CD4-positive, alpha-beta memory T cell (primary cell): ENCODE measurements at regions of chr19 and their contacts with region 1.

Region 1: DNA sequence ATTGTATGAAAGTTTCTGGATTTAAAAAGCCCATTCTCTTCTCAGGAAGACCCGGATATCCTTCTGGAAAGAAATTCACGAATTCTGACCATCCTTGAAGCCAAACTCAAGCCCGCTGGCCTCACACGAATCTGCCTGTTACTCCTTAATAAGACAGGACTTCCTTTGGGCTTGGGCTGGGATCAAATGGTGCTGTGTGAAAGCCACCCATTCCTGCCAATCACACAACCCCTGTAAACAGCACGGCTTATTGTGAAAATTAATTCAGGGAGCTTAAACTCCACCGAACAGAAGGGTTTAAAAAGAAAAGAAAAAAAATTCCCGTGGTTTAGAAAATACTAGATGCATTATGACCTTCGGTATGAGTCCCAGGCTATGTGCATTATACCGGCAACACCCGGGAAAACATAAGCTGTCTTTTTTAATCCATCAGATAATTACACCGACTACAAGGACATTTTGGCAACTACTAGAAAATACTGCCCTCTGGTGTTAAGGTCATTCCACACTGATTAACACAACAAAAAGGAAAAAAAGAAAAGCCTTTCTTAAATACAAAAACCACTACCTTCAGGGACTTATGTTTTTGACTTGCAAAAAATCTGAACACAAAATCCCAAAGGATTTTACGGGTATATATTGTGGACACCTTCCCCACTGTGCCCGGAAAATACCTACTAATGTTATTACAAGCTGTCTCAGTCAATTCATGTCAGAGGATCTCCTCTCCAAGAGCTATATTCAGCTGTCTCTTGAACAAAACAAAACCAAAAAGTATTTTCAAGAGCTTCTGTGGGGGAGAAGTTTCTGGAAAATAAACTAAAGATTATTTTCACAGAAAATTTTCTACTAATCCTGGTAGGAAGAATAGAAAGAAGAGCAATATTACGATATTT is 76.0 kb upstream of the LSM14A start:
- DNase-seq: peak in 4 of 5 donors; percentile 37 to 47 (median 42)
- H3K4me3 ChIP-seq: no peak overlapping the region
- H3K4me3 Mint-ChIP-seq: no peak overlapping the region
- H3K27ac ChIP-seq: no peak overlapping the region
- H3K27ac Mint-ChIP-seq: no peak overlapping the region
- H3K4me1 ChIP-seq: no peaks in the 10 kb centered on the region
- H3K4me1 Mint-ChIP-seq: peaks cover 0 to 2% (median under 1%) of the 10 kb centered on the region in 4 donors
- H3K27me3 ChIP-seq: peaks cover 4% of the 10 kb centered on the region
- H3K27me3 Mint-ChIP-seq: peaks cover 10 to 18% of the 10 kb centered on the region in 2 donors

Region 2: GRCh38 chr19:33795370-33796163 is 300.7 kb before region 1 on chr19:
- CTCF ChIA-PET with region 1: interaction called, 6 read pairs
- POLR2A ChIA-PET with region 1: no interaction called
- intact Hi-C with region 1: loop called (anchors 5 kb)
- DNase-seq: peak; percentile 31 to 54 (median 45)
- H3K4me3 ChIP-seq: peak overlapping the region in 1 of 2 donors; percentile 35
- H3K4me3 Mint-ChIP-seq: peak overlapping the region; percentile 74 to 87 (median 78)
- H3K27ac ChIP-seq: peak overlapping the region; percentile 15
- H3K27ac Mint-ChIP-seq: peak overlapping the region in 3 of 7 donors; percentile 16 to 77 (median 47)
- H3K4me1 ChIP-seq: peaks cover 14% of the 10 kb centered on the region
- H3K4me1 Mint-ChIP-seq: peaks cover 3 to 29% (median 5%) of the 10 kb centered on the region in 4 donors
- H3K27me3 ChIP-seq: peaks cover 11% of the 10 kb centered on the region
- H3K27me3 Mint-ChIP-seq: peaks cover 13 to 17% of the 10 kb centered on the region in 2 donors

Region 3: GRCh38 chr19:33819880-33820781 is 276.1 kb before region 1 on chr19:
- CTCF ChIA-PET with region 1: no interaction called
- POLR2A ChIA-PET with region 1: no interaction called
- intact Hi-C with region 1: loop called (anchors 1 kb)
- DNase-seq: peak; percentile 52 to 68 (median 64)
- H3K4me3 ChIP-seq: peak overlapping the region; percentile 47 to 48
- H3K4me3 Mint-ChIP-seq: peak overlapping the region; percentile 76 to 86 (median 80)
- H3K27ac ChIP-seq: peak overlapping the region; percentile 36
- H3K27ac Mint-ChIP-seq: peak overlapping the region in 6 of 7 donors; percentile 29 to 77 (median 70)
- H3K4me1 ChIP-seq: peaks cover 18% of the 10 kb centered on the region
- H3K4me1 Mint-ChIP-seq: peaks cover 8 to 48% (median 33%) of the 10 kb centered on the region in 4 donors
- H3K27me3 ChIP-seq: no peaks in the 10 kb centered on the region
- H3K27me3 Mint-ChIP-seq: no peaks in the 10 kb centered on the region

Region 4: GRCh38 chr19:34041925-34042521 is 54.2 kb before region 1 on chr19:
- CTCF ChIA-PET with region 1: interaction called, 10 read pairs
- POLR2A ChIA-PET with region 1: no interaction called
- intact Hi-C with region 1: loop called (anchors 1 kb)
- DNase-seq: peak; percentile 41 to 61 (median 45)
- H3K4me3 ChIP-seq: no peak overlapping the region
- H3K4me3 Mint-ChIP-seq: no peak overlapping the region
- H3K27ac ChIP-seq: no peak overlapping the region
- H3K27ac Mint-ChIP-seq: no peak overlapping the region
- H3K4me1 ChIP-seq: no peaks in the 10 kb centered on the region
- H3K4me1 Mint-ChIP-seq: peaks cover 0 to 2% (median 0%) of the 10 kb centered on the region in 4 donors
- H3K27me3 ChIP-seq: no peaks in the 10 kb centered on the region
- H3K27me3 Mint-ChIP-seq: peaks cover 7 to 23% of the 10 kb centered on the region in 2 donors

Region 5: DNA sequence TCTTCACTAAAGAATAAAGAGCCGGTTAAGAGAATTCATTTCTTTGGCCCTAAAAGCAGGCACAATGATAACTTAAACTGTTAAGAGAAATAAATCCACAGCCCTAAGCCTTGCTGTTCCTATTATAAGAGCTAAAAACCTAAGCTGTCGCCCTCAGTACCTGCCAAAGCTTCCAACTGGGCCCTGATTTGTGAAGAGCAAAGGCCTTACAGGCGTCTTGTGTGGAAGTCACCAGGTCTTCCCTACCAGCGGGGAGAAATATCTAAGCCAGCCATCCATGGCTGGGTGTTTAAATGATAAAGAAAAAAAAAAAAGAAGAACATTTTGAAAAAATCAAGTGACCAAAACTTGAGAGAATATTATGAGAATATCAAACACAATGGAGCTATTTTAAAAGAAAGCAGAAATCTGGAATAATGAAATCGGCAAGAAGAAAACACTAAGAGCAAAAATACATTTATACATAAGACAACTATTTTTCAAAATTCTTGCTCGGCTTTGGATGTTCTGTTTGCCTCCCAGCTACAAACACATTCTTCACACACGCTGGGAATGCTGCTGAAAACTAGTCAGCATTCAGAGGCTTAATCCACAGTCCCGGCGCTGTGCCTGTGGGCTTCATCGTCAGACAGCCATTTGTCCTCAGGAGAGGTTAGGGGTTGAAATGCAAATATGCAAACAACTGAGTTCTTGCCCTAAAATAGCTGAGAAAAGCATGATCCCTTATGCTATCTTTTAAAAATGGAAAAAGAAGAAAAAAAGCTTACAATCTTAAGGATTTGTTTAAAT is 13.8 kb before region 1 on chr19:
- CTCF ChIA-PET with region 1: interaction called, 17 read pairs
- POLR2A ChIA-PET with region 1: no interaction called
- intact Hi-C with region 1: no loop called
- DNase-seq: no peak
- H3K4me3 ChIP-seq: no peak overlapping the region
- H3K4me3 Mint-ChIP-seq: no peak overlapping the region
- H3K27ac ChIP-seq: no peak overlapping the region
- H3K27ac Mint-ChIP-seq: no peak overlapping the region
- H3K4me1 ChIP-seq: no peaks in the 10 kb centered on the region
- H3K4me1 Mint-ChIP-seq: no peaks in the 10 kb centered on the region
- H3K27me3 ChIP-seq: peaks cover 4% of the 10 kb centered on the region
- H3K27me3 Mint-ChIP-seq: peaks cover 13 to 25% of the 10 kb centered on the region in 2 donors